ENCODE measurements at regions of chr2 and their contacts with region 1.

Region 1: DNA sequence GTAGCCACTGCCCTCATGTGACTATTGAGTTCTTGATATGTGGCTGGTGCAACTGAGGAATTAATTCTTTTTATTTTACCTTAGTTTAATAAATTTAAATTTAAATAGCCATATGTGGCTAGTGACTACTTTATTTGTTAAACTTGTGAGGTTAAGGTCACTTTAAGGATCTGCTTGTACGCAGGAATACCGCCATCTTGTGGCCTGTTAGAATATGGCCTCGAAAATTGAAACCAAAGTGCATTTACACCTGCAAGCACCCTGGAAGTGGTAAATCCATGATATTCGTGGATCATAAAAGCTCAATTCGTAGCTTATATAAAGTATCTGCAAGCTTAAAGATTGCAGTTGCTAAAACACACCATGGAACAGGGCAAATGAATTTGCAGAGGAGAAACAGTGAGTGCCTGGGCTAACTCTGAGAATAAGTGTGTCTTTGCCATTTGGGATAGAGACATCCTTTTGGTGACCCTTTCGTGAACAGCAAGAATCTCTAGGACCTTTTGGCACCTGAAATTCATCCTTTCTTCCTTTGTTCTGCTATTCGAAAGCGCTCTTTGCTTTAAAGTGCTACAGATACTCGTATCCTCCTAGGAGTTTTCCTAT is 59.9 kb upstream of the REG3A start:
- DNase-seq: peak in 3 of 6 donors; percentile 53 to 73 (median 55)
- ATAC-seq: peak; percentile 69 to 94 (median 90)
- H3K4me3 ChIP-seq: no peak overlapping the region
- H3K27ac ChIP-seq: peak overlapping the region in 1 of 4 donors; percentile 27
- H3K4me1 ChIP-seq: peaks cover 0 to 13% (median 0%) of the 10 kb centered on the region in 3 donors
- H3K27me3 ChIP-seq: no peaks in the 10 kb centered on the region
- CTCF ChIP-seq: peak; percentile 71 to 80 (median 75)

Region 2: DNA sequence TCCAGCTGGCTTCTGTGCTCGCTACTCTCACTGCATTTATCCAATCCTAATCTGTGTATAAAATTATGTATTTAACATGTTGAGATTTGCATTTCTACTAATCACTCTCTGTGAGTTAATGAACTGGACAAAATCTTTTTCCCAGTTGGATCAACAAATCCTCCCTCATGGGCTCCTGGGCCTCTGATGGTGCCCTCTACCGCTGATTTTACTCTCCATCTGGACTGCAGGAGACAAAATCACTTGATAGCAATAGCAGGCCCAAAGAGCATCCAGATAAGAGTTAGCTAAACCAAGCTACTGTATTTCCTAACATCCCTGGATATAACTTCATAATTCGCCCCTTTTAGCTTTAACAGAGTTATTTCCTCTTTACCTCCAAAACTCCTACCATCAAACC is 179.5 kb before region 1 on chr2:
- intact Hi-C with region 1: loop called in 1 of 3 experiments (anchors 5 kb)
- DNase-seq: no peak
- ATAC-seq: peak; percentile 47 to 60 (median 52)
- H3K4me3 ChIP-seq: no peak overlapping the region
- H3K27ac ChIP-seq: peak overlapping the region in 2 of 4 donors; percentile 34 to 47
- H3K4me1 ChIP-seq: peaks cover 7 to 33% (median 12%) of the 10 kb centered on the region in 3 donors
- H3K27me3 ChIP-seq: no peaks in the 10 kb centered on the region
- CTCF ChIP-seq: no peak

Region 3: DNA sequence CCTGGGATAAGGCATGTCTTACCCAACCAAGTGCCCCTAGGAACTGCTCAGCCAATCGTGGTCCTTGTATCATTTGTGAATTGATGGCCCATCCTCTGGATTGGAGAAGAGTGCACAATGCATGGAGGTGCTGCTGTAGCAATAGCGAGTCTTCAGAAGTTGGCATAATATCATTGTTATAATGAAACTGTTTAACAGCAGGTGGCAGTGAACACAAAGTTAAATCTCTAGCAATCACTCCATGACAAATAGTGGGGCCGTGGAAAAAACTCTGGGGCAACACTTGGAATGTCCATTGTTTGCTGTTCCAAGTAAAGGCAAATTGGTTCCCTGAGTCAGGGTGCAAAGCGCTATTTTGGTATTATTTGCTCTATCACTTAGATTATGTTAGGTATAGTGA is 87.8 kb before region 1 on chr2:
- intact Hi-C with region 1: loop called in 2 of 3 experiments (anchors 5 to 10 kb)
- DNase-seq: peak in 1 of 6 donors; percentile 49
- ATAC-seq: peak; percentile 28 to 72 (median 60)
- H3K4me3 ChIP-seq: no peak overlapping the region
- H3K27ac ChIP-seq: peak overlapping the region in 2 of 4 donors; percentile 1 to 70
- H3K4me1 ChIP-seq: peaks cover 0 to 11% (median 4%) of the 10 kb centered on the region in 3 donors
- H3K27me3 ChIP-seq: no peaks in the 10 kb centered on the region
- CTCF ChIP-seq: no peak

Region 4: DNA sequence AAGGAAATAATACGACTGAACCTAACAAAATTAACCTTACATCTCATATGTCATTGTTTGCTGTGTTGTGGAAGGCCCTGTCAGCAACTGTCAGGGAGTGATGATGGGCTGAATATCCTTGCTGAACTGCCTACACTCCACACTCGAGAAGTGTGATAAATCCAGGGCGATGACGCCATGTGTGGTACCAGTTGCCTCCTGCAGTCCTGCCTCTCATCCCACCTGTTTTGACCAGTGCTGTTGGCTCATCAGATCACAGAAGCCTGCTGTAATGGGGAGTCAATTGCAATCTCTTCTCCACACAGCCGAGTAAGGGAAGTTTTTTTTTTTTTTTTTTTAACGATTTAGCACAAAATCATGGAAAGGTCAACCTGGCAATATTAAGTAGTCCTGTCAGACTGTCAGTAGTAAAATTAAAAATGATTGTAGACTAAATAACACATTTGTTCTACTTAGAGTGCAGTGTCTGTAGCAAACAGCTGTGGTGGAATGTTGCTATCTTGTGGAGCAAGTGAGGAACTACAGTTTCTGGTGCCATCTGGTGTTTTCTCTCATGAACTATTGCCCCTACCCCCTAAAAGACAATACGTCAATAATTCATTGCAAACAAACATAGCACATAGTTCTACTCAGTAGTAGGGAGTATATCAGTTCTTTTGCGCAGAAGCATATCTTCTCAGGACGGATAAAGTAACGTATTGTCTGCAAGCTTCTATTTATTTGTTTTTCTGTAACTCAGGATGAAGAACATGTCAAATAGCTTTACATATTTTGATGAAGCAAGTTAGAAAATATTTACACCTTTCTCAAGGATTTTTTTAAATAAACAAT is 641.0 kb after region 1 on chr2:
- intact Hi-C with region 1: loop called in 1 of 3 experiments (anchors 10 kb)
- DNase-seq: peak in 2 of 6 donors; percentile 13 to 21
- ATAC-seq: peak; percentile 71 to 95 (median 88)
- H3K4me3 ChIP-seq: no peak overlapping the region
- H3K27ac ChIP-seq: no peak overlapping the region
- H3K4me1 ChIP-seq: peaks cover 0 to 7% (median 6%) of the 10 kb centered on the region in 3 donors
- H3K27me3 ChIP-seq: no peaks in the 10 kb centered on the region
- CTCF ChIP-seq: peak in 3 of 4 donors; percentile 16 to 47 (median 45)

Measured in pancreas (tissue), 10 donors.